ENCODE measurements at regions of chr5 and their contacts with region 1.

Region 1: GRCh38 chr5:36739751-36740221 is 133.4 kb downstream of the SLC1A3 start:
- DNase-seq: peak; percentile 72 to 91
- H3K4me3 ChIP-seq: no peak overlapping the region
- CTCF ChIP-seq: no peak
- POLR2A ChIP-seq: no peak

Region 2: DNA sequence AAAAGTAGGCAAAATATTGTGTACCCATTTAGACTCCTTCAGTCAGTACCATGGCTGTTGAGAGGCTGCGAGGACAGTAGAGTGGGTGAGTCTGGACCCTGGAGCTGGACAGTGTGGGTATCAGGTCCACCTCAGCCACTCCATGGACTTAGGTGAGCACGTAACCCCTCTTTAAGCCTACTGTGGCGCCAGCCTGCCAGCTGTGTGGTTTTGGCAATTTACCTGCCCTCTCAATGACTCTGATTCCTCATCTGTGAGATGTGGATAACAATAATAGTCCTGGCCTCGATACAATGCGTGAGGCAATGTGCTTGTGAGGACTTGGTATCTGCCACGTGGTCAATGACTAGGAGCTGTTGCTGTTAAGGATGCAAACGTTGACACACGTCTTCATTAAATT is 115.5 kb before region 1 on chr5:
- intact Hi-C with region 1: no loop called
- DNase-seq: no peak
- H3K4me3 ChIP-seq: no peak overlapping the region
- CTCF ChIP-seq: no peak
- POLR2A ChIP-seq: no peak

Region 3: DNA sequence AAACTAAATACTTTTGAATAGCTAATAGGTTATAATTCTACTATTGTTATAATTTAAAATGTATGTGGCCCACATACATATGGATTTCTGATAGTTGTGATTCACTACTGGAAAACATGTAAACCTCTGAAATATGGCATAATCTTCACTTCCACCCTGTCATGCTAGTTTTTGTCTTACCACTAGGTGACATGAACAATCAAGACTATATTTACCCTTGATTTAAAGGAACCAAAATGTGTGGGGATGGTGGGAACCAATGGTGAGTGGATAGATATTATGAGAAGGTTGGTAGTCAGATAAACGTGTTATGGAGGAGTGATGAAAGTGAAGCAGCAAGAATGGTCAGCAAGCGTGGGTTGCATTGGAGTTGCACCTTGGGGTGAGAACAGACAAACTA is 126.4 kb after region 1 on chr5:
- intact Hi-C with region 1: loop called (anchors 5 kb)
- DNase-seq: no peak
- H3K4me3 ChIP-seq: no peak overlapping the region
- CTCF ChIP-seq: no peak
- POLR2A ChIP-seq: no peak

Region 4: DNA sequence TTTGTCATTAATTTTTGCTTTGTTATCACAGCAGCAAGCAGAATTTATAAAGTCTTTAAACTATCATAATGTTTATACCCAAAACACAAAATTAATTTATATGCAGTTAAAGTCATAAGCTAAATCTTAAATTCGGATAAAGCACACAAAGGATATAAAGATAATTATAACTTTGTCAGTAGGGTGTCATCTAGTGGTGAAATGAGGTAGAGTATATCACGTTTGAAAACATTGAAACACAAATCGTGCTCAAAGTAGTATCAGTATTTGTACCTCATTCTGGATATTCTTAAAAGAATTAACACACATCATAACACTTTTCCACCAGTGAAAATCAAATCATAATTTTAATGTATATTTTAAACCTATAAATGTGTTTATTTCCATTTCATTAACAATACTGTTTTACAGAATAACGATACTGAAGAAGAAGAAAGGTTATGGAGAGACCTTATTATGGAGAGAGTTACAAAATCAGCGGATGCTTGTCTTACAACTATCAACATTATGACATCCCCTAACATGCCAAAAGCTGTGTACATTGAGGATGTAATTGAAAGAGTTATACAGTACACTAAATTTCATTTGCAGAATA is 266.3 kb after region 1 on chr5:
- intact Hi-C with region 1: loop called (anchors 10 kb)
- DNase-seq: no peak
- H3K4me3 ChIP-seq: no peak overlapping the region
- CTCF ChIP-seq: no peak
- POLR2A ChIP-seq: no peak